HCT116 (cell line): ENCODE measurements at regions of chr5 and their contacts with region 1.

Region 1: GRCh38 chr5:102865510-102866236 is 110.6 kb downstream of the PAM start:
- DNase-seq: peak; percentile 86
- ATAC-seq: peak; percentile 86
- H3K4me3 ChIP-seq: peak overlapping the region; percentile 68 to 80
- H3K27ac ChIP-seq: peak overlapping the region; percentile 99
- H3K4me1 ChIP-seq: peaks cover 53 to 68% of the 10 kb centered on the region in 2 experiments
- H3K27me3 ChIP-seq: no peaks in the 10 kb centered on the region
- CTCF ChIP-seq: no peak
- POLR2A ChIP-seq: peak; percentile 54
- RAD21 ChIP-seq: 0 out of 2 replicates have a peak, but pooled peaks have one; percentile 22

Region 2: GRCh38 chr5:102959055-102959454 is 93.4 kb after region 1 on chr5:
- CTCF ChIA-PET with region 1: no interaction called
- POLR2A ChIA-PET with region 1: interaction called, 3 read pairs
- RAD21 ChIA-PET with region 1: no interaction called
- intact Hi-C with region 1: loop called (anchors 5 kb)
- DNase-seq: peak; percentile 92
- ATAC-seq: peak; percentile 95
- H3K4me3 ChIP-seq: peak overlapping the region in 1 of 2 experiments; percentile 34; a peak in 1 of 4 replicates
- H3K27ac ChIP-seq: peak overlapping the region; percentile 94
- H3K4me1 ChIP-seq: peaks cover 60 to 67% of the 10 kb centered on the region in 2 experiments
- H3K27me3 ChIP-seq: no peaks in the 10 kb centered on the region
- CTCF ChIP-seq: no peak
- POLR2A ChIP-seq: no peak
- RAD21 ChIP-seq: peak; percentile 44